Activated CD4-positive, alpha-beta T cell treated with anti-CD3 and anti-CD28 coated beads, Interleukin-2, amount 10 ng/mL, durations not matched to agents 7 days and 5 days (primary cell): ENCODE measurements at regions of chr6 and their contacts with region 1.

Region 1: GRCh38 chr6:12012558-12013306 is 620 bp downstream of the HIVEP1 start:
- DNase-seq: peak; percentile 73
- H3K4me3 Mint-ChIP-seq: peak overlapping the region; percentile 99
- H3K27ac Mint-ChIP-seq: peak overlapping the region; percentile 99
- H3K4me1 Mint-ChIP-seq: peaks cover 58% of the 10 kb centered on the region
- H3K27me3 Mint-ChIP-seq: no peaks in the 10 kb centered on the region

Region 2: GRCh38 chr6:11835065-11835464 is 177.7 kb before region 1 on chr6:
- CTCF ChIA-PET with region 1: no interaction called
- POLR2A ChIA-PET with region 1: no interaction called
- DNase-seq: no peak
- H3K4me3 Mint-ChIP-seq: no peak overlapping the region
- H3K27ac Mint-ChIP-seq: no peak overlapping the region
- H3K4me1 Mint-ChIP-seq: no peaks in the 10 kb centered on the region
- H3K27me3 Mint-ChIP-seq: no peaks in the 10 kb centered on the region

Region 3: DNA sequence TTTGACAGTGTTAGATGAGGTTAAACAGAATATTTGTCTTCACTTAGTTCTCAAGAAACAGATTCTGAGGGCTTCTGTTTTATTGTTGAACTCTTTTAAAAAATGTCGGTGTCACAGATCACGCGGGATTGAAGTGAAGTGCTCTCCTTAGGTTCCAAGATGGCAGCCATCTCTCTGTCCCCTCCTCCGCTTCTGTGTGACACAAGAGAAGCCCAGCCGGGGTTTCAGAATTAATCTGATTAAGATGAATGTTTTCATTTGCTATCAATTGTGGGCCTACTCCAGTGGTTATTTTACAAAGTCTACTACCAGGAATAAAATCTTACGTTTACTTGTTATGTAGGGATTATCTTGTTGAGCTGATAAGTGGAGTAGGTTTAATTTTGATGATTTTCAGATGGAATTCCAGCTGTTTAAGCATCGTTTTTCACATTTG is 10.2 kb after region 1 on chr6:
- CTCF ChIA-PET with region 1: interaction called, 13 read pairs
- POLR2A ChIA-PET with region 1: no interaction called
- DNase-seq: no peak
- H3K4me3 Mint-ChIP-seq: no peak overlapping the region
- H3K27ac Mint-ChIP-seq: no peak overlapping the region
- H3K4me1 Mint-ChIP-seq: peaks cover 32% of the 10 kb centered on the region
- H3K27me3 Mint-ChIP-seq: no peaks in the 10 kb centered on the region